Cardiac septum (tissue), 1 donor: ENCODE measurements at regions of chr20 and their contacts with region 1.

Region 1: DNA sequence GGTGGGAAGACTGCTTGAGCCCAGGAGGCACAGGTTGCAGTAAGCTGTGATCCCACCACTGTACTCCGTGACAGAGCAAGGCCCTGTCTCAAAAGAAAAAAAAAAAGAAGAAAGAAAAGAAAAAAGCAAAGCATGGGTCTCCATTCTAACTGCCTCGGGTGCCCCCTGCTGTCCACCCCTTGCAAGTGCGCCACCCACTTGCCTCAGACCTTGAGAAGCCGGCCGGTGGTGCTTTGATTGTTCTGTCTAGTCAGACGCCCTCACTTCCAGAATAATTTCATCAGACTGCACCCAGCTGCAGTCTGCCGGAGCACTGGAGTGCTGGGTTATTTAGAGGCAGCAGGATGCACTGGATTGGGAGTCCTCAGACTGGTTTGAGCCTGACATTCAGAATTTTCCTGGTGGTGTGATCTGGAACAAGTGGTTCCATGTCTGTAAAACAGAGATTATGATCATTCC is 17.6 kb upstream of the TM9SF4 start:
- DNase-seq: peak; percentile 82

Region 2: DNA sequence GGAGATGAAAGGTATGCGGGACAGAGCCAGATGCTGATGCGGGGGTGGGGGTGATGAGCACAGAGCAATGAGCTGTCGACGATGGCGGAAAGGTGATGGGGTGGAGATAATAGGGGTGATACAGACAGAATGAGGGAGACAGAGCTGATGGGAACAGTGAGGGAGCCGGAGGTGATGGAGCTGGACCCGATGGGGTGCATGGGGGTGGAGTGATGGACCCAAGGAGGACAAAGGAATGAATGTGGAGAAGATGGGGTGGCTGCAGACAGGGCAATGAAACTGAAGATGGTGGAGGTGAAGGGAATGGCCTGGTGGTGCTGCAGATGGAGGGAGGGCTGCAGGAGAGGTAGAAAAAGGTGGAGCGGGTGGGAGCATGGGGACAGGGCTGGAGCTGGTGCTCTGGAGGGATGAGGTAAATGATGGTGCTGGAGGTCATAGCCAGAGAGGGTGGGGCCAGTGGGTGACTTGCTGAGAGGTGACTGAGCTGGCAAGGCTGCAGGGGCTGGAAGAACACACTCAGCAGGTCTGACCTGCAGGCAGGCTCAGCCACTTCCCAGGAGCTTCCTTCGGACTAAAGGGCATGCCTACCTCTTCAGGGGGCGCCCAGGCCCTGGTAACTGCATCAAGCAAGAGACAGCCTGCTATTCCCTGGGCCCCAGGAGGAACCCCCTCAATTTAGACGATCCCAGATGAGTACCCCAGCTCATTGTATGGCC is 240.5 kb before region 1 on chr20:
- intact Hi-C with region 1: loop called (anchors 5 kb)
- DNase-seq: no peak